Dorsolateral prefrontal cortex (tissue), 120 donors: ENCODE measurements at regions of chr17 and their contacts with region 1.

Region 1: DNA sequence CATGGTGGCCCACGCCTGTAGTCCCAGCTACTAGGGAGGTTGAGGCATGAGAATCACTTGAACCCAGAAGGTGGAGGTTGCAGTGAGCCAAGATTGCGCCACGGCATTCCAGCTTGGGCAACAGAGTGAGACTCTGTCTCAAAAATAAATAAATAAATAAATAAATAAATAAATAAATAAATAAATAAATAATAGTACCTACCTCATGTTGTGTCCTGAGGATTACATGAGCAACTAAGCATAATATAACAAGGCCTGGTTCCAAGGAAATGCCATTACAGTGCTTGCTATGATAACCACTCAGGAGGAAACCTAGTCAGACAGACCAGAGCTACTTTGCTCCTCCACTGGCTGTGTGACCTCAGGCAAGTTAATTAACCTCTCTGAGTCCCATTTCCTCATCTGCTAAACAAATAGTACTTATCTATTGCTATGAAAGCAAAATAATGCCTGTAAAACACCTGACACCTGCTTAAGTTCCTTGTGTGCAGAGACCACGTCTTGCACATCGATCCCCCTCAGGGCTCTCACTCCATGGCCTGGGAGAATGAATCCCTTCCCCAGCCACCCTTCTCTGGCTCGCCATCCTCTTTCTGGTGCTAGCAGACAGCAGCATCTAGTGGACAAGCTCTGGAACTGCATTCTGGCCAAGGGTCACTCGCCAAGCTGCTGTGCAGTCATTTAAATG is 7.5 kb downstream of the EPOP start:
- DNase-seq: peak in 9 of 10 donors; percentile 35 to 82 (median 69)
- H3K4me3 ChIP-seq: no peak overlapping the region
- H3K27ac ChIP-seq: peak overlapping the region in 1 of 59 donors; percentile 13
- H3K27me3 ChIP-seq: no peaks in the 10 kb centered on the region
- CTCF ChIP-seq: peak; percentile 85 to 100 (median 98)

Region 2: DNA sequence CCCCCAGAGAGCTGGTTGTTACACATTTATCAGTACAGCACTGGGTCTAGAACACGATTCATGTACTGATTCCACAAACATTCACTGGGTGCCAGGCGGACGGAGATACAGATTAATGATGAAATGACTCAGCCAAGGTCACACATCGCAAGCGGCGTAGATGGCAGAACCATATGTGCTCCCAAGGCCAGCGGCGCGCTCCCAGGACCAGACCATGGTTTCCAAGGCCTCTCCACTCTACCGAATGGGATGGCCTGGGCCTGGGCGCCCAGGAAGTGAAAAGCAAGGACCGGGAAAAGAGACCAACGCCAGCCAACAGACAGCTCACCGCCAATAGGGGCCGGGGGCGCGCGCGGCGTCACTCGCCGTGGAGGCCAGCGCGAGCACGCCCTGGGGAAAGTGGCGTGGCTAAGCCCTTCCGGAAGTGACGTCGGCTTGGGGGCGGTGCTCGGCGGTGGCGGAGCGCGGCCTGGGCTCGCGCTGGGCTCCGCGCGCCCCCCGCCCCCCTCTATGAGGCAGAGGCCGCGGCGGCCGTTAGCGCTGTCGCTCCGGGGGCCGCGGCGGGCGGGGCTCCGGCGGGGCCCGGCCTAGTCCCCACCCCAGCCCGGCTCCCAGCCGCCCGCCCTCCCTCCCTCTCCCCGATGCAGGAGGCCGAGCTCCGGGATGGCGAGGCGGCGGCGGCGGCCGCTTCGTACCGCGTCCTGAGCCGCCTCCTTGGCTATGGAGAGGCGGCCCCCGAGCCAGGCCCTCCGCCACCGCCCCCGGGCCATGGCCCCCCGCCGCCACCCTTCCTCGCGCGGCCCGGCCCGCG is 315.6 kb before region 1 on chr17 and contains the start of gene SOCS7:
- intact Hi-C with region 1: loop called in 1 of 2 experiments (anchors 5 kb)
- DNase-seq: peak; percentile 84 to 95 (median 92)
- H3K4me3 ChIP-seq: peak within 1 kb of the TSS; percentile 71 to 95 (median 88)
- H3K27ac ChIP-seq: peak within 1 kb of the TSS; percentile 11 to 95 (median 85)
- H3K27me3 ChIP-seq: no peaks in the 10 kb centered on the region
- CTCF ChIP-seq: peak in 36 of 56 donors; percentile 7 to 55 (median 31)
- total RNA-seq, gene SOCS7: 34.3 to 82.0 (median 51.3) TPM

Region 3: DNA sequence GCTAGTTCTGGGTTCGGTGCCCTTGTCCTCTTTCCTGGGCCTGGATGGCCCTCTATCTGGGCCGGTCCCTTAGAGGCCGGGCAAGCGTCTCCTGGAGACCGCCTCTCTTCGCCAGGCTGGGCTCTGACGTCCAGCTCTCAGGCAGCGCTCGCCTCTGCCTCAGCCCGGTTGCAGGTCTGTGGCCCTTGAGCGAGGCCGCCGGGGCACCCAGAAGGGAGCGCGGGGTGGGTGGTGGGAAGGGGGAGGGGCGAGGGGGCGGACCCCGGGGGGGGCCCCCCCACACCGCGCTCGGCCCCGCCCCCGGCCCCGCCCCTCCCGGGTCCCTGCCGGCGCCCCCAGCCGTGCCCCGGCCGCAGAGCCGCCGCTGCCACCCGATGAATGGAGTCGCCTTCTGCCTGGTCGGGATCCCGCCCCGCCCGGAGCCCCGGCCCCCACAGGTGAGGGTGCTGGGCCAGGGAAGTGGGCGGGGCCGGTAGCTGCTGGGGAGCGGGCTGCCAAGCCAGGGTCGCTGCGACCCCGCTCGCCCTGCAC is 239.1 kb before region 1 on chr17 and contains the start of gene ARHGAP23:
- intact Hi-C with region 1: loop called (anchors 5 to 10 kb)
- DNase-seq: peak; percentile 57 to 85 (median 74)
- H3K4me3 ChIP-seq: peak within 1 kb of the TSS; percentile 59 to 97 (median 85)
- H3K27ac ChIP-seq: peak within 1 kb of the TSS; percentile 92 to 100 (median 98)
- H3K27me3 ChIP-seq: no peaks in the 10 kb centered on the region
- CTCF ChIP-seq: peak in 5 of 56 donors; percentile 8 to 28 (median 10)
- total RNA-seq, gene ARHGAP23: 93.2 to 496 (median 159) TPM

Region 4: DNA sequence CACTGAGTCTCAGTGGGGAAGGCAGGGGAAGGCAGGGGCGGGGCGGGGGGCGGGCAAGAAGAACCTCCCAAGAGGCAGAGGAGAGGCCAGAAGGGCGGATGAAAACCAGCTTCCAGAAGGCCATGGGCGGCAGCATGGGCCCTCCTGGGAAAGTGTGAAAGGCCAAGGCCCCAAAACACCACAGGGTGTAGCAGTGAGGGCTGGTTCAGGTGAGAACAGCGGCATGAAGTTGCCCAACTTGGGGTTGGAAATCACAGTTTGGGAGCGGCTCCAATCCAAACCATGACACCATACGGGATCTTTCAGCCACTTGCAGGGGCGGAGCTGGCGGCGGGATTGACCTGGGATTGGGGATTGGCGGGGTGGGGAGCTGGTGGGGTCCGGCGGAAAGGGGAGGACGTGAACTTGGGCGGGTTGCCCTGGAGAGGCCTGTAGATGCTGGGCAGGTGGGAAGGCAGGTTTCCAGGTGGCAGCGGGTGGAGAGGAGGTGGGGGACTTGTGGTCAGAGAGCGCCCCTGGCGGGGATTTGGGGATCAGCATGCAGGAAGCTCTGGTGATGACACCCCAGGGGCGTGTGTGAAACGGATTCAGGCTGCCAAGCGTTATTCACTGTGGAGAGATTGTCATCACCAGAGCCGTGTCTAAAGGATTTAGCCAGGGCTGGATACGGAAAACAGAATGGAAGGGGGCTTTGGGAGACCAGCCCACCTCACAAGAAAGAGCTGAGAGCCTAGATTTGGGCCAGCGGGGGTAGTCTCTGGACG is 158.1 kb before region 1 on chr17:
- intact Hi-C with region 1: loop called (anchors 2 to 5 kb)
- DNase-seq: peak; percentile 68 to 94 (median 86)
- H3K4me3 ChIP-seq: peak overlapping the region in 43 of 59 donors; percentile 5 to 51 (median 35)
- H3K27ac ChIP-seq: peak overlapping the region in 49 of 59 donors; percentile 12 to 85 (median 68)
- H3K27me3 ChIP-seq: no peaks in the 10 kb centered on the region
- CTCF ChIP-seq: peak; percentile 39 to 86 (median 68)

Region 5: GRCh38 chr17:38584350-38584925 is 82.8 kb before region 1 on chr17:
- intact Hi-C with region 1: loop called (anchors 5 kb)
- DNase-seq: peak in 4 of 10 donors; percentile 71 to 87 (median 78)
- H3K4me3 ChIP-seq: peak overlapping the region in 9 of 59 donors; percentile 1 to 35 (median 9)
- H3K27ac ChIP-seq: peak overlapping the region in 36 of 59 donors; percentile 1 to 81 (median 54)
- H3K27me3 ChIP-seq: peaks cover 0 to 6% (median 0%) of the 10 kb centered on the region in 45 donors
- CTCF ChIP-seq: peak; percentile 82 to 98 (median 95)